ENCODE measurements at regions of chr7 and their contacts with region 1.

Region 1: GRCh38 chr7:80918909-80919662 is at the start of gene SEMA3C:
- DNase-seq: peak; percentile 94
- H3K4me3 Mint-ChIP-seq: peak within 1 kb of the TSS; percentile 91
- H3K27ac Mint-ChIP-seq: peak within 1 kb of the TSS; percentile 87
- H3K4me1 Mint-ChIP-seq: peaks cover 29% of the 10 kb centered on the region
- H3K27me3 Mint-ChIP-seq: no peaks in the 10 kb centered on the region
- CTCF ChIP-seq: no peak
- total RNA-seq, gene SEMA3C: 91.0 and 140 TPM in 2 replicates

Region 2: DNA sequence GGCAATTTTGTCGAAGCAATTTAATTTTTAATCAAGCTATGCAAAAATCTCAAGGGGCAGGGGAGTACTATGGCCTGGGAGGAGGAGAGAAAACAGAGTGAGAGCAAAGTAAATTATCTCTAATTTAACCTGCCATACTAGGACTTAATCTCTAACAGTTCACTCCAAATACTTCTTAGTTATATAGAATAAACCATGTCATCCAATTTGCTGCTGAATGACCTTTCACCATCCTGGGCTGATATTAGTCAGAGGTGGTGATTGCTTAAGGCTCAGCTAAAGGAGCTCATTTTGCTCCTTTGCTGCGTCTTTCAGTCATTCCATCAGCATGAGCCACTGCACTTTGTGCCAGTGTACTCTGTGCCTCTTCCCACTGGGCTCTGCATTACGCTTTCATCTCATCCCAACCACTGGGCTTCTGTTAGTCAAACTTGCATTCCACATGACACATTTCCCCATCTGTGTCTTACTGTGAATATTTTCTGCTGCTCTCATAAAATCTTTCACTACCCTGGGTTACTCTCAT is 196.4 kb before region 1 on chr7:
- CTCF ChIA-PET with region 1: no interaction called
- POLR2A ChIA-PET with region 1: interaction called, 19 read pairs
- intact Hi-C with region 1: loop called (anchors 5 kb)
- DNase-seq: peak; percentile 99
- H3K4me3 Mint-ChIP-seq: peak overlapping the region; percentile 49
- H3K27ac Mint-ChIP-seq: peak overlapping the region; percentile 89
- H3K4me1 Mint-ChIP-seq: peaks cover 42% of the 10 kb centered on the region
- H3K27me3 Mint-ChIP-seq: no peaks in the 10 kb centered on the region
- CTCF ChIP-seq: no peak

Region 3: GRCh38 chr7:80826520-80827238 is 92.4 kb before region 1 on chr7:
- CTCF ChIA-PET with region 1: no interaction called
- POLR2A ChIA-PET with region 1: interaction called, 12 read pairs
- intact Hi-C with region 1: loop called (anchors 5 kb)
- DNase-seq: peak; percentile 90
- H3K4me3 Mint-ChIP-seq: no peak overlapping the region
- H3K27ac Mint-ChIP-seq: no peak overlapping the region
- H3K4me1 Mint-ChIP-seq: peaks cover 44% of the 10 kb centered on the region
- H3K27me3 Mint-ChIP-seq: no peaks in the 10 kb centered on the region
- CTCF ChIP-seq: no peak

Region 4: GRCh38 chr7:80900583-80901576 is 18.2 kb before region 1 on chr7:
- CTCF ChIA-PET with region 1: interaction called, 6 read pairs
- POLR2A ChIA-PET with region 1: interaction called, 18 read pairs
- intact Hi-C with region 1: no loop called
- DNase-seq: peak; percentile 87
- H3K4me3 Mint-ChIP-seq: no peak overlapping the region
- H3K27ac Mint-ChIP-seq: peak overlapping the region; percentile 85
- H3K4me1 Mint-ChIP-seq: peaks cover 49% of the 10 kb centered on the region
- H3K27me3 Mint-ChIP-seq: no peaks in the 10 kb centered on the region
- CTCF ChIP-seq: no peak

Region 5: GRCh38 chr7:81013083-81013817 is 94.2 kb after region 1 on chr7:
- CTCF ChIA-PET with region 1: interaction called, 4 read pairs
- POLR2A ChIA-PET with region 1: interaction called, 29 read pairs
- intact Hi-C with region 1: loop called (anchors 1 kb)
- DNase-seq: peak; percentile 88
- H3K4me3 Mint-ChIP-seq: peak overlapping the region; percentile 15
- H3K27ac Mint-ChIP-seq: peak overlapping the region; percentile 94
- H3K4me1 Mint-ChIP-seq: peaks cover 7% of the 10 kb centered on the region
- H3K27me3 Mint-ChIP-seq: no peaks in the 10 kb centered on the region
- CTCF ChIP-seq: no peak

Region 6: DNA sequence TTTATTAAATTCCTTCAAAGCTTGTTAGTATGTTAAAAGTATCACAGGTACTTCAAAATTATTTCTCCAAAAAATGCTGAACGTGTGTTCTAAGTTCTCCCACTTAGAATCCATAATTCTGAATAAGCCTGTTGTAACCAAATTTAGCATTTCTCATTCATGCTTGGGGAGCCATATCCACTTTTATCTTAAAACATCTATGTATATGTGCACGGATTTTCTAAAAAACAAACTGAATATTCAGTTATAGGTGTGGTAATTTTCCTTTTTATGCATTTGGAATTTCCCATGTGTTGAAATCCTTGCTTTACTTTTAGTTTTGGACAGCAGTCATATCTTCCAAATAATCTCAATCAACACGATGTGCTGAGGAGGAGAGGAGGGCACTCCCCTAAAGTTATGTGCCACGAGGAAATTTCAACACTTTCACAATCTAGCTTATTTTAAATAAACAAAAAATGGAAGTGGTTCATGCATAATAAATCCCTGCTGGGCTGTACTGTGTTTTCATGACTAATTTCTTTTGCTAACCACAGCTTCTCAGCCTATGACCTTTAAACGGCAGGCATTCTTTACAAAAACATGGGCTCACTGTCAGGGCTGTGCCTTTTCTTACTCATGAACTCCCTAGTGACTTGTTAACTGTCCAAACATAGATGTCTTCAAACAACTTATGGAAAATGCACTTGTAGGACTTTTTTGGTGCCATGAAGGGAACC is 380.0 kb after region 1 on chr7:
- CTCF ChIA-PET with region 1: no interaction called
- POLR2A ChIA-PET with region 1: interaction called, 46 read pairs
- intact Hi-C with region 1: loop called (anchors 2 kb)
- DNase-seq: peak; percentile 94
- H3K4me3 Mint-ChIP-seq: peak overlapping the region; percentile 38
- H3K27ac Mint-ChIP-seq: peak overlapping the region; percentile 99
- H3K4me1 Mint-ChIP-seq: peaks cover 43% of the 10 kb centered on the region
- H3K27me3 Mint-ChIP-seq: no peaks in the 10 kb centered on the region
- CTCF ChIP-seq: no peak

Region 7: DNA sequence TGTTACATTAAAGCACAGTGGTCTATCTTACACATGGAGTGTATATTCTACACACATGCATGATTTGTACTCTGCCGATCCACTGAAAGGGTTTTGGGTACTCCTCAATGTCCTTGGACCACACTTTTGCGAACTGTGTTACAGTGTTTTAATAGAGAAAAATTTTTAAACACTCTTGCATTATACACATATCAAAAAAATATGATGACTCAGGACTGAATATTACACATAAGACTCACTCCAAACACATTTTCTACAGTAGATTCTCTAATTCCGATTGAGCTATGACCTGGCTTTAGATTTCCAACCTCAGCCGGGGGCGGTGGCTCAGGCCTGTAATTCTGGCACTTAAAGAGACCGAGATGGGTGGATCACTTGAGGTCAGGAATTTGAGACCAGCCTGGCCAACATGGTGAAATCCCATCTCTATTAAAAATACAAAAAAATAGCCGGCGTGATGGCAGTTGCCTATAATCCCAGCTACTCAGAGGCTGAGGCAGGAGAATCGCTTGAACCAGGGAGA is 1302.1 kb after region 1 on chr7:
- CTCF ChIA-PET with region 1: no interaction called
- POLR2A ChIA-PET with region 1: no interaction called
- intact Hi-C with region 1: no loop called
- DNase-seq: no peak
- H3K4me3 Mint-ChIP-seq: no peak overlapping the region
- H3K27ac Mint-ChIP-seq: no peak overlapping the region
- H3K4me1 Mint-ChIP-seq: no peaks in the 10 kb centered on the region
- H3K27me3 Mint-ChIP-seq: peaks cover 14% of the 10 kb centered on the region
- CTCF ChIP-seq: no peak

Measured in MCF 10A (cell line).